ENCODE measurements at regions of chr20 and their contacts with region 1.

Region 1: DNA sequence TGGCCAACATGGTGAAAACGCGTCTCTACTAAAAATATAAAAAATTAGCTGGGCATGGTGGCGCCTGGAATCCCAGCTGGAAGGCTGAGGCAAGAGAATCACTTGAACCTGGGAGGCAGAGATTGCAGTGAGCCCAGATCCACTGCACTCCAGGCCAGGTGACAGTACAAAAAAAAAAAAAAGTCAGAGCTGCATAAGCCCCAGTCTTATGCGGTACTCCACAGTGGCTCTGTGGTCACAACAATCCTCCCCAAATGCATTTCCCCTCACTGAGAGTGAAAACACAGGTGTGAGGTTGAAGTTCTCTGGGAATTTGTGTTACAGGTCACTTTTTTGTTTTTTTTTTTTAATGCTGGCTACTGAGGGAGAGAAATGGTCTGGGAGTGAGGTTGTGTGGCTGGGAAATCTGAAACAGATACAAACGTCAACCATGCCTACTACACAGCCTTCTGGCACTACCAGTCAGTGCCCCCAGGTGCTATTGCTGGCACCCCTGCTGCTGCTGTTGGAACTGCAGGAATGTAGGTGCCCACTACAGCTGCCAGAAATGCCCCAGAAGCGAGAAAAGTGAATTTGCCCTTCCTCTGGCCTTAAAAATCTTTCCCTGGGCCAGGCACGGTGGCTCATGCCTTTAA is 5.7 kb downstream of the MRPS26 start:
- DNase-seq: no peak
- ATAC-seq: no peak
- H3K4me3 ChIP-seq: no peak overlapping the region
- H3K27ac ChIP-seq: no peak overlapping the region
- H3K4me1 ChIP-seq: peaks cover 8 to 14% (median 11%) of the 10 kb centered on the region in 9 donors
- H3K27me3 ChIP-seq: no peaks in the 10 kb centered on the region
- CTCF ChIP-seq: no peak

Region 2: GRCh38 chr20:3106658-3107463 is 55.4 kb after region 1 on chr20:
- intact Hi-C with region 1: loop called in 3 of 10 experiments (anchors 5 kb)
- DNase-seq: no peak
- ATAC-seq: no peak
- H3K4me3 ChIP-seq: no peak overlapping the region
- H3K27ac ChIP-seq: no peak overlapping the region
- H3K4me1 ChIP-seq: peaks cover 0 to 19% (median 0%) of the 10 kb centered on the region in 9 donors
- H3K27me3 ChIP-seq: no peaks in the 10 kb centered on the region
- CTCF ChIP-seq: no peak

Region 3: GRCh38 chr20:3115190-3116107 is 63.9 kb after region 1 on chr20:
- intact Hi-C with region 1: loop called (anchors 1 to 5 kb)
- DNase-seq: peak in 1 of 2 donors; percentile 15
- ATAC-seq: peak; percentile 18 to 62 (median 51)
- H3K4me3 ChIP-seq: no peak overlapping the region
- H3K27ac ChIP-seq: no peak overlapping the region
- H3K4me1 ChIP-seq: peaks cover 0 to 25% (median 6%) of the 10 kb centered on the region in 9 donors
- H3K27me3 ChIP-seq: no peaks in the 10 kb centered on the region
- CTCF ChIP-seq: peak; percentile 58 to 85 (median 78)

Region 4: GRCh38 chr20:3135507-3136070 is 84.1 kb after region 1 on chr20:
- intact Hi-C with region 1: no loop called
- DNase-seq: no peak
- ATAC-seq: no peak
- H3K4me3 ChIP-seq: no peak overlapping the region
- H3K27ac ChIP-seq: no peak overlapping the region
- H3K4me1 ChIP-seq: no peaks in the 10 kb centered on the region
- H3K27me3 ChIP-seq: no peaks in the 10 kb centered on the region
- CTCF ChIP-seq: no peak

Region 5: GRCh38 chr20:3312940-3313682 is 261.6 kb after region 1 on chr20:
- intact Hi-C with region 1: loop called in 4 of 10 experiments (anchors 10 kb)
- DNase-seq: no peak
- ATAC-seq: peak in 7 of 8 donors; percentile 32 to 75 (median 56)
- H3K4me3 ChIP-seq: no peak overlapping the region
- H3K27ac ChIP-seq: peak overlapping the region in 9 of 10 donors; percentile 3 to 78 (median 64)
- H3K4me1 ChIP-seq: peaks cover 5 to 56% (median 40%) of the 10 kb centered on the region in 9 donors
- H3K27me3 ChIP-seq: no peaks in the 10 kb centered on the region
- CTCF ChIP-seq: no peak